Activated CD8-positive, alpha-beta memory T cell treated with anti-CD3 and anti-CD28 coated beads, Interleukin-2, amount 10 ng/mL, durations not matched to agents 7 days and 5 days (primary cell): ENCODE measurements at regions of chr17 and their contacts with region 1.

Region 1: DNA sequence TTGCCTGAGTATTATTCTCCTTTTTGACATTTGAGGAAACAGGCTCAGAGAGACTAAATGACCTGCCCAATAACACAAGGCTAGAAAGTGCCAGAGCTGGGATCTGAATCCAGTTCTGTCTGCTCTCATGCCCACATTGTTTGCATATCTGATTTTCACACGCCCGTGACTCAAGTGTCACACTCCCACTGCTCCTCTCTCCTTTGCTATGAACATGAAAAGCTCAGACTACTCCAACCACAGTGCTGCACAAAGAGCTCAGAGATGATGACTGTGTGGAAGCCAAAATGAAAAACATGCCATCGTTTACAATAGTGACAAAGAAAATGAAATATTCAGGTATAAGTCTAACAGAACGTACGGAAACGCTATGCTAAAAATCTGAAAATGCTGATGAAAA is 107.9 kb downstream of the SMG6 start:
- DNase-seq: no peak
- ATAC-seq: no peak
- H3K4me3 Mint-ChIP-seq: no peak overlapping the region
- H3K27ac Mint-ChIP-seq: no peak overlapping the region
- H3K4me1 Mint-ChIP-seq: peaks cover 50% of the 10 kb centered on the region
- H3K27me3 Mint-ChIP-seq: no peaks in the 10 kb centered on the region

Region 2: GRCh38 chr17:2215616-2216364 is 20.1 kb after region 1 on chr17:
- CTCF ChIA-PET with region 1: interaction called, 10 read pairs
- DNase-seq: peak; percentile 89
- ATAC-seq: peak; percentile 99
- H3K4me3 Mint-ChIP-seq: peak overlapping the region; percentile 63
- H3K27ac Mint-ChIP-seq: peak overlapping the region; percentile 89
- H3K4me1 Mint-ChIP-seq: peaks cover 66% of the 10 kb centered on the region
- H3K27me3 Mint-ChIP-seq: no peaks in the 10 kb centered on the region